ENCODE measurements at regions of chr15 and their contacts with region 1.

Region 1: GRCh38 chr15:46696281-46696680 is 1021.0 kb upstream of the SEMA6D start:
- DNase-seq: no peak
- ATAC-seq: no peak
- H3K4me3 ChIP-seq: no peak overlapping the region
- H3K4me3 Mint-ChIP-seq: no peak overlapping the region
- H3K27ac ChIP-seq: no peak overlapping the region
- H3K27ac Mint-ChIP-seq: no peak overlapping the region
- H3K4me1 ChIP-seq: no peaks in the 10 kb centered on the region
- H3K4me1 Mint-ChIP-seq: no peaks in the 10 kb centered on the region
- H3K27me3 ChIP-seq: no peaks in the 10 kb centered on the region
- H3K27me3 Mint-ChIP-seq: no peaks in the 10 kb centered on the region
- CTCF ChIP-seq: no peak

Region 2: DNA sequence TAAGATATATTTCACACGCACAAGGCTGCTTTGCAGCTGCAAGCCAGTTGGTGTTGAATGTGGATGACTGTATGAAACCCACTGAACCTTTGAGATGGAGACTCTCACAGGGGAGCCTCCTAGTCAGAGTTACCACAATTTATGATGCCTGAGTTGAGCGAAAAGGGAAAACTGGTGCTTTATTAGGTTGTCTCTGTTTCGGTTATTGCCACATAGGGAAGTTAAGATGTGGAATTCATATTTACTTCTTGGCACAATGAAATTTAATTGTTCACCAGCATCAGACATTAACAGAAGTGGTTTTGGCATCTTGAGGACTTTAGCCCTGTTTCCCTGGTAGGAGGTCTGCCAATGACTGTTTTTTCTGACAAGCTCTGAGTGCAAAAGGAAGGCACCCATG is 703.2 kb before region 1 on chr15:
- CTCF ChIA-PET with region 1: no interaction called
- POLR2A ChIA-PET with region 1: no interaction called
- intact Hi-C with region 1: no loop called
- DNase-seq: no peak
- ATAC-seq: no peak
- H3K4me3 ChIP-seq: no peak overlapping the region
- H3K4me3 Mint-ChIP-seq: no peak overlapping the region
- H3K27ac ChIP-seq: no peak overlapping the region
- H3K27ac Mint-ChIP-seq: no peak overlapping the region
- H3K4me1 ChIP-seq: no peaks in the 10 kb centered on the region
- H3K4me1 Mint-ChIP-seq: no peaks in the 10 kb centered on the region
- H3K27me3 ChIP-seq: no peaks in the 10 kb centered on the region
- H3K27me3 Mint-ChIP-seq: no peaks in the 10 kb centered on the region
- CTCF ChIP-seq: no peak

Region 3: DNA sequence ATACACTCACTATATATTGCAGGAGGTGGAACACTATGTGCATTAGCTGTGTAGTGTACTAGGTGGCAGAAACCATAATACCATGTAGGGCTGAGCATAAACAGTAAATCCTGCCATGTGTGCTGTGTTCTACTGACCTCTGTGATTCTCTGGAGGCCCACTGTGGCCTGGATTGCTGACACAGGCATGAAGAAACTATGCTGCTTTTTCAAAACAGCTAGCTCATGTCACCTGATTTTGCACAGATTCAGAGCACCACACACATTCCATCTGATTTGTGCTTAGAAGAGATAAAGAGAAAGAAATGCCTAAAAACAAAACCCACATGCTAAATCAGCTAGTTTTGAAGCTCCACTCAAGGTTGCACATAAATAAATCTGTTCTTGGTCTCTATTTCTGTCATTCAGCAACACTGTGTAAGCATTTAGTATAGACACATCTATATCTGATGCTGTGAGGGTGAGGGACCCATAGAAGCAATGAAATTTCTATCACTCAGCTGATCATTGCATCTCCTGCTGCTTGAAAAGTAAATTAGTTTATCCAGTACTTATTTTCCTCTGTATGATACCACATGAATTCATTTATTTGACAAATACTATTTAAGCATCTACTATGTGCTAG is 13.3 kb after region 1 on chr15:
- CTCF ChIA-PET with region 1: no interaction called
- POLR2A ChIA-PET with region 1: no interaction called
- intact Hi-C with region 1: no loop called
- DNase-seq: no peak
- ATAC-seq: no peak
- H3K4me3 ChIP-seq: no peak overlapping the region
- H3K4me3 Mint-ChIP-seq: no peak overlapping the region
- H3K27ac ChIP-seq: no peak overlapping the region
- H3K27ac Mint-ChIP-seq: no peak overlapping the region
- H3K4me1 ChIP-seq: no peaks in the 10 kb centered on the region
- H3K4me1 Mint-ChIP-seq: no peaks in the 10 kb centered on the region
- H3K27me3 ChIP-seq: no peaks in the 10 kb centered on the region
- H3K27me3 Mint-ChIP-seq: no peaks in the 10 kb centered on the region
- CTCF ChIP-seq: no peak

Region 4: GRCh38 chr15:46735115-46735514 is 38.8 kb after region 1 on chr15:
- CTCF ChIA-PET with region 1: no interaction called
- POLR2A ChIA-PET with region 1: no interaction called
- intact Hi-C with region 1: loop called in 1 of 2 experiments (anchors 5 kb)
- DNase-seq: no peak
- ATAC-seq: no peak
- H3K4me3 ChIP-seq: no peak overlapping the region
- H3K4me3 Mint-ChIP-seq: no peak overlapping the region
- H3K27ac ChIP-seq: no peak overlapping the region
- H3K27ac Mint-ChIP-seq: no peak overlapping the region
- H3K4me1 ChIP-seq: no peaks in the 10 kb centered on the region
- H3K4me1 Mint-ChIP-seq: no peaks in the 10 kb centered on the region
- H3K27me3 ChIP-seq: no peaks in the 10 kb centered on the region
- H3K27me3 Mint-ChIP-seq: no peaks in the 10 kb centered on the region
- CTCF ChIP-seq: no peak